A549 (cell line): ENCODE measurements at regions of chr16 and their contacts with region 1.

Region 1: GRCh38 chr16:3400779-3401688 is at the starts of genes ZNF174 and ZSCAN32:
- DNase-seq: peak; percentile 99 to 100
- ATAC-seq: peak; percentile 99
- H3K4me3 ChIP-seq: peak within 1 kb of the TSS; percentile 75
- H3K27ac ChIP-seq: peak within 1 kb of the TSS; percentile 85 to 94
- H3K4me1 ChIP-seq: no peaks in the 10 kb centered on the region
- CTCF ChIP-seq: no peak
- EP300 ChIP-seq: no peak
- POLR2A ChIP-seq: peak; percentile 79
- RAD21 ChIP-seq: no peak
- polyA plus RNA-seq, gene ZNF174: 15.8 and 16.4 TPM in 2 replicates
- polyA plus RNA-seq, gene ZSCAN32: 29.4 and 33.0 TPM in 2 replicates

Region 2: DNA sequence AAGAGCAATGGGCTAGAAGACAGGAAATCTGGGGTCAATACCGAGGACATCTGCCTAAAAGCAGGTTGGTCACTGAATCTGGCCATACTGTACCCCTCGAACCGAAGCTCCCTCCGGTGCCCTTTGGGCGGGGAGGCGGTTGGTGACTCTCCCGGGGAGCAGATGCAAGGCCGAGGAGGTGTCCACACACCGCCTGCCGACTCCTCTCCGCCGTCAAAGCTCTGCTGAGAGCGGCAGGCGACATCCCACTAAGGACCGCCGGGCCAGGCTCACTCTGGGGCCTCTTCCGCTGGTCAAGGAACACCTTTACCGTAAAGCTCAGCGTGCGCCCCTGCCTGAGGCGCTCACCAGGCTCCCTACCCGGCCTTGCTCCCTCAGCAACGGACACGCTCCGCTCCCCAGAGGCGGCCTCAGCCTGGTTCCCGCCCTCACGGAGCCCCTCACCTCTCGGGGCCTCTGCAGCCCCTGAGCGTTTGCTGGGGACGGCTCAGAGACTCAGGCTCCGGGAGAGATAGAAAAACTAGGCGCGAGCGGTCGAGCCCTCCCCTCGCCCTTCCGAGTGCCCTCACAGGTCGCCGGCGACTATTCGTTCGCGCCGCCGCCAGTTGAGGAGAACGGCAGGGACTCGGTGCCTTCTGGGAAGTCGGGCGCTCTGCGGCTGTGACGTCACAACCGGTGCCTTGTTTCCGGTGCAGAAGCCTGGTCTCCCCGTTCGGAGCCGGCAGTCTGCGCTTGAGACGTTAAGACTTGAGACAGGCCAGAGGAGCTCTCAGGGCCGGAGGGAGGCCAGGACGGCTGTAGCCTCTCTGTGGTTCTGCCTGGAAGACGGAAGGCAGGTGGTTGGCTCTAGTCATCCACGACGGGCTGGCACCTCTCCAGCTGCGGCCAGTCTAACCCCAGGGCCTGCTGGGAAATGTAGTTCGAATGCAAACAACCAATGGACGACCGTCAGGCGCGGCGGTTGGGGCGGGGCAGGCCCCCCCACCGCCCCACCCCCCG is 166.2 kb before region 1 on chr16 and contains the start of gene ZNF200:
- CTCF ChIA-PET with region 1: no interaction called
- POLR2A ChIA-PET with region 1: no interaction called
- DNase-seq: peak; percentile 94 to 97
- ATAC-seq: peak; percentile 98 to 99
- H3K4me3 ChIP-seq: peak within 1 kb of the TSS; percentile 86
- H3K27ac ChIP-seq: peak within 1 kb of the TSS; percentile 92 to 96
- H3K4me1 ChIP-seq: peaks cover 7% of the 10 kb centered on the region; the same call in 2 of the 3 replicates
- CTCF ChIP-seq: no peak
- EP300 ChIP-seq: no peak
- POLR2A ChIP-seq: peak; percentile 79
- RAD21 ChIP-seq: no peak
- polyA plus RNA-seq, gene ZNF200: 7.4 and 7.5 TPM in 2 replicates

Region 3: DNA sequence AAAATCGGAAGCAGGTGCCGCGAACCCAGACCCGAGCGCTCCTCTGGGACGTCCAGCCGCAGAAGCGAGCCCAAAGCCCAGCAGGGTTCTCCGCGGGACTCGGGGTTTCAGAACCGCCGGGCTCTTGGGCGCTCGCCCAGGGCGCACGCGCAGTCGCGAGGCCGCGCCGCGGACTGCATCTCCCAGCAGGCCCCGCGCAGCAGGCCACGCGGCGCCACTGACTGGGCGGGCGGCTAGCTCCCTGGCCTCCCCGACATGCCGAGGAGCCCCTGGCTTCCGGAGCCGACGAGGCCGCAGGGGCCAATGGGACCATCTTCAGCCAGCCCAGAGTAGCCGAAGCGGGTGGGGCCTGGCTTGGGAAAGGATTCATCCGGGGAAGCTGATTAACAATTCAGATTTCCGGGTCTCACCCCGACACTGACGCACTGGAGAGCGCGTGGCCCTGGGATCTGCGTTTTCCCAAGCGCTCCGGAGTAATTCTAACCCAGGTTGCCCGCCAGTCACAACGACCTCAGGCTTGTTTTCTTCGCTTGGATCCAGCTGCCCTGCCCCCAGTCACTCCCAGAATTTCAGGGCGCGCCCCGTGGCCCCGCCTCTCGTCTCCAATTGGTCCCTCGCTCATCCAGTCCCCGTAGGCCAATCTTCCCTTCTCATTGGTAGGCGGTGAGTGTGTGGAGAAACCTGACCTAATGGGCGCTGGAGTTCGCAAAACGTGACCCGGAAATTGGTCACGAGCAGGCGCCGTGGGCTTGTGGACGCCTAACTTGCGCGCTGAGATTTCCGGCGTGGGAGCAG is 118.1 kb before region 1 on chr16 and contains the start of gene ZNF263:
- CTCF ChIA-PET with region 1: no interaction called
- POLR2A ChIA-PET with region 1: interaction called, 15 read pairs
- DNase-seq: peak; percentile 97 to 98
- ATAC-seq: peak; percentile 94
- H3K4me3 ChIP-seq: peak within 1 kb of the TSS; percentile 80
- H3K27ac ChIP-seq: peak within 1 kb of the TSS; percentile 90 to 97
- H3K4me1 ChIP-seq: no peaks in the 10 kb centered on the region
- CTCF ChIP-seq: no peak
- EP300 ChIP-seq: no peak
- POLR2A ChIP-seq: peak; percentile 67
- RAD21 ChIP-seq: no peak; a peak in 1 of 5 replicates
- polyA plus RNA-seq, gene ZNF263: 20.9 and 38.4 TPM in 2 replicates

Region 4: GRCh38 chr16:3383045-3383448 is 18.0 kb before region 1 on chr16:
- CTCF ChIA-PET with region 1: interaction called, 10 read pairs
- POLR2A ChIA-PET with region 1: interaction called, 3 read pairs
- DNase-seq: peak in 1 of 2 experiments; percentile 19
- ATAC-seq: no peak; a peak in 1 of 6 replicates
- H3K4me3 ChIP-seq: no peak overlapping the region
- H3K27ac ChIP-seq: no peak overlapping the region
- H3K4me1 ChIP-seq: no peaks in the 10 kb centered on the region
- CTCF ChIP-seq: no peak
- EP300 ChIP-seq: no peak
- POLR2A ChIP-seq: no peak
- RAD21 ChIP-seq: no peak

Region 5: DNA sequence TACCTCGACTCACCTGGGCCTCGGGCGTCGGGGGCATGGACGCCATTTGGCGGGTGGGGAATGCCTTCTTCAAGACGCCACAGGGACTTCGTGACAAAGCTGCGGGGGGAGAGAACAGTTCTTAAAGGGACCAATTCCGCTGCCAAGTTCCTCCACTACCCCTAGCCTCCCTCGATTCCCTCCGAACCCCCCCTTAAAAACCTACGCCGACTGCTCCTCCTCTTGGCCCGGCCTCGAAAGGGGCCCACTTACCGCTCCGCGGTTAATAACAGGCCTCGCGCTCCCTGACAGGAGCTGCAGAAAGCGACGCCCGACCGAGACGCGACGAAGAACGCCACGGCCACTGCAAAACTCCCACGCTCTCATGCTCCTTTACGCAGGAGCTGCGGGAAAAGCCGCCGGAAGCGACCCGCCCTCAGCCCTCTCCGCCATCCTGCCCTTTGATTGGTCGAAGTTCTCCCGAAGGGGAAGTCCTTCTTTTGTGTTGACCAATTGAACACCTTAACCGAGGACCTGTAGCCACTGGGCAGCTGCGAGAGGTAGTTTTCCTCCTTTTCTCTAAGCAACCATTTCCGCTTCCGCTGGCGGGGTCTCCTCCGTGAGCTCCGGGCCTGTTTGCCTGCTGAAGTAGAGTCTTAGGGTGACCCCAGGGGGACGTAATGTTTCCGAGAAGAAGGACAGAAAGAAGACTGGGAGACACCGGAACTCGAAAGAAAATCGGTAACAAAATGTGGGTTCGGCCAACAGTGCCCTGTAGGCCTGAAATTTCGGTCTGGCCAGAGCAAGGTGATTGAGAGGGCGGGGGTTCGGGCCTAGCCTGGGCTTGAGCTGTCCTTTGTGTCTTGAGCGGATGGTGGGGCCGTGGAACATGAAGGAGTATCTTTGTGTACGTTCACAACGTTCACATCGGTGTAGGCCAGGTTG is 42.3 kb after region 1 on chr16 and contains the starts of genes NAA60 and ZNF597:
- CTCF ChIA-PET with region 1: interaction called, 3 read pairs
- POLR2A ChIA-PET with region 1: interaction called, 12 read pairs
- DNase-seq: peak; percentile 68 to 92
- ATAC-seq: peak; percentile 99
- H3K4me3 ChIP-seq: peak within 1 kb of the TSS; percentile 60
- H3K27ac ChIP-seq: peak within 1 kb of the TSS; percentile 65 to 86
- H3K4me1 ChIP-seq: no peaks in the 10 kb centered on the region
- CTCF ChIP-seq: no peak
- EP300 ChIP-seq: no peak
- POLR2A ChIP-seq: peak; percentile 35
- RAD21 ChIP-seq: no peak
- polyA plus RNA-seq, gene NAA60: 34.8 and 41.6 TPM in 2 replicates
- polyA plus RNA-seq, gene ZNF597: 1.9 TPM in 2 replicates

Region 6: DNA sequence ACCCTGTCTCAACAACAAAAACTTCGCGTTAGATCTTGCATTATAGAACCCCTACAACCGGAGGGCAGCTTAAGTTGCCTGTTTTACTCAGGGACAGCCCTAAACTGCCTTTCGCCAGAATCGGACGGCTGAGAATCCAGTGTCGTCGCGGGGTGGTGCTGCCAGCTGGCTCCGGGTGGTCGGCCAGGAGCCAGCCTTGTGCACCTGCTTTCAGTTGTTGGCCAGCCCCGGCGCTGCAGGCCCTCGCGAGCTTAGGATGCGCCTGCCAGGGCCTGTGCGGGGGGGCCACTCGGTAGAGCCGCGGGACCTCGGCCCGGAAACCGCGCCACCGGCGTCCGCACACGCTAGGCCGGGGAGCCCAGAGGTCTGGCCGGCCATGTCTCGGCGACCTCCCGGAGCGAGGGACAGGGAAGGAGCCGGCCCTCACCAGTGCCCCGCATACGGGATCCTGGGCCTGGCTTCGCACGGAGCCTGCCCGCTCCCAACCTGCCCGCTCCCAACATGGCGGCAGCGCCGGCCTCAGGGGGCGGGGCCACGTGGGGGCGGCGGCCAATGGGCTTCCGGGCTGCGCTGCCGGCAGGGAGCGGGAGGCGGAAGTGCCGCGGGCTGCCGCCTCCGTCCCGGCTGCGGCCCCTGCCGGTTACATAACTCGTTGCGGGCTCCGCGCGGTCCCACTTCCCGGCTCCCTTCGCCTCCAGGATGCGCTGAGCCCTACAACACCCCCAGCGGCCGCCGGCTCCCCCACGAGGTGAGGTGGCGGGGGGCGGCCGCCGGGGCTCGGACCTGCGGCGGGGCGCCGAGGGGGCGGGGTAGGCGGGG is 56.6 kb after region 1 on chr16:
- CTCF ChIA-PET with region 1: no interaction called
- POLR2A ChIA-PET with region 1: interaction called, 16 read pairs
- DNase-seq: peak; percentile 92 to 98
- ATAC-seq: peak; percentile 90 to 95
- H3K4me3 ChIP-seq: peak overlapping the region; percentile 100
- H3K27ac ChIP-seq: peak overlapping the region; percentile 99
- H3K4me1 ChIP-seq: peaks cover 33% of the 10 kb centered on the region
- CTCF ChIP-seq: peak; percentile 45
- EP300 ChIP-seq: no peak; a peak in 1 of 5 replicates
- POLR2A ChIP-seq: peak; percentile 78
- RAD21 ChIP-seq: peak; percentile 29 to 56; a peak in 2 of 5 replicates

Region 7: GRCh38 chr16:3706253-3706999 is 305.4 kb after region 1 on chr16:
- CTCF ChIA-PET with region 1: no interaction called
- POLR2A ChIA-PET with region 1: no interaction called
- DNase-seq: no peak
- ATAC-seq: no peak
- H3K4me3 ChIP-seq: no peak overlapping the region
- H3K27ac ChIP-seq: no peak overlapping the region
- H3K4me1 ChIP-seq: no peaks in the 10 kb centered on the region
- CTCF ChIP-seq: no peak
- EP300 ChIP-seq: no peak
- POLR2A ChIP-seq: no peak
- RAD21 ChIP-seq: no peak